Endothelial cell of umbilical vein (primary cell): ENCODE measurements at regions of chr1 and their contacts with region 1.

Region 1: DNA sequence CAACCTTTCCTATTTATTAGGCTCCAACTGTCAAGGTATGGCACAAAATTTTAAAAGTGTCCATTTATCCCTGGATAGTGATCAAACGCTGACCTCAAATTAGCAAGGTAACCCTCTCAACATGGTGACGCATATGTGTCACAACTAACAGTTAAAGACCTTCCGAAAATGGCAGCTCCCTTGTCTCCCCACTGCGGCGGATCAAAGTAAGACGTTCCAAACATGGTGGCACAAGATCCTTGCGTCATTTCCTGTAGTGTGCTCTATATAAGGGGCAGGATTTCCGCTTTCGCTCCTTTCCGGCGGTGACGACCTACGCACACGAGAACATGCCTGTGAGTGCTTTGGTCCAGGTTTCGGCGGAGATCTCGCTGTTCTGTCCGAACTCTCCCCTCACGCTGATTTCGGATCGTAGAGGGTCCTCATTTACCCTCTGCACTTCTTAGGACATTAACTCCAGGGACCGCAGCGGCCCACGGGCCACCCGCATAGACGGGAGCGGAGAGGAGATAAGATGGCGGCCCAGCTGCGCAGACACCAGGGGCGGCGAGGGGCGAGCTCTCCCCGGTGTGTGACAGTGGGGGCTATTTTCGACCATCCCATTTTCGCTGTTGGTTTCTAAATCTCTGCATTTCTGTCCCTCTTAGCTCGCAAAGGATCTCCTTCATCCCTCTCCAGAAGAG is at the start of gene RPS27:
- DNase-seq: peak; percentile 96
- H3K4me3 ChIP-seq: peak within 1 kb of the TSS; percentile 15 to 86 (median 79)
- H3K27ac ChIP-seq: peak within 1 kb of the TSS; percentile 90
- H3K4me1 ChIP-seq: peaks cover 24% of the 10 kb centered on the region
- H3K27me3 ChIP-seq: no peaks in the 10 kb centered on the region
- CTCF ChIP-seq: no peak
- POLR2A ChIP-seq: peak; percentile 99
- total RNA-seq, gene RPS27: 1,120 and 1,234 TPM in 2 replicates

Region 2: GRCh38 chr1:152034646-152035405 is 1955.8 kb before region 1 on chr1:
- CTCF ChIA-PET with region 1: no interaction called
- POLR2A ChIA-PET with region 1: no interaction called
- dilution Hi-C with region 1: no loop called
- intact Hi-C with region 1: loop called (anchors 5 kb)
- DNase-seq: peak; percentile 60
- H3K4me3 ChIP-seq: peak overlapping the region; percentile 55 to 99 (median 98)
- H3K27ac ChIP-seq: peak overlapping the region; percentile 81
- H3K4me1 ChIP-seq: peaks cover 21% of the 10 kb centered on the region
- H3K27me3 ChIP-seq: peaks cover 6 to 9% of the 10 kb centered on the region in 2 experiments
- CTCF ChIP-seq: peak; percentile 66 to 74
- POLR2A ChIP-seq: peak; percentile 25

Region 3: DNA sequence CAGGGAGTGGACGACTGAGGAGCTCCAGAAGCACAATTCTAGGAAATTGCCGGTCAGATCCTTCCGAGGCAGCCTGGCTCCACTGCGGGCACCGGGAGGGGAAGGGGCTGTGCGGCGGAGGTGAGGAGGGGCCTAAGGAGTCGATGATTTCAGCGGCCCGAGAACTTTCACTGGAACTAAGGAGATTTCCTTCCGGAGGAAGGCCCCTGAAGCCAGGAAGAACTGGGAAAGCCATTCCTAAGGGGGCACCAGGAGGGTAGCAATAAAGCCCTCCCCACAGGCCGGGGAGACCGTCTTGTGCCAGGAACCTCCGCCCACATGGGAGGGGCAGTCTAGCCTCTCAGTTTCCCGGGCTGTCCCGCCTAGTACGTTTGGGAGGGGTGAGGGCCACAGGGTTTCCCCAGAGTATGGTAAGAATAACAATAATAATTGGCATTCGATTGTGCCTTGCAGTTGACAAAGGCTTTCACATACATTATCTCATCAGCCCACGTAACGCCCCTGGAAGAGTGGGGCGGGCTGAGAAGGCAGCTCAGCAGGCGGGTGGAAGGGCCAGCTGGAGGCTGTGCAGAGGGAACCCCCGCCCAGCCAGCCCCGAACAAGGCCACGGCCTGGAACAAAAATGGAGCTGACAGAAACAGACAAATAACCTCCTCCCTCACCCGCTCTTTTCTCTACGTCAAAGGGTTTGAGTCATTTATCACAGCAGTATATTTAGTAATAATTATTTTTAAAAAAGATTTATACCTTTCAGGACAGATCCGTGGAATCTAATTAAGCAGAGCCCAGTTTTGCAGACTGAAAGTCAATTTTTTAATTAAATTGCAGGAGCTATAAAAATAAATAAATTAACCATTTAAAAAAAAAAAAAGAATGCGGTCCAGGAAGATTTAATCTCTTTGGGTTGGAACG is 292.3 kb before region 1 on chr1:
- CTCF ChIA-PET with region 1: interaction called, 3 read pairs
- POLR2A ChIA-PET with region 1: no interaction called
- dilution Hi-C with region 1: no loop called
- intact Hi-C with region 1: loop called (anchors 1 kb)
- DNase-seq: peak; percentile 96
- H3K4me3 ChIP-seq: no peak overlapping the region
- H3K27ac ChIP-seq: peak overlapping the region; percentile 90
- H3K4me1 ChIP-seq: peaks cover 26% of the 10 kb centered on the region
- H3K27me3 ChIP-seq: no peaks in the 10 kb centered on the region
- CTCF ChIP-seq: no peak
- POLR2A ChIP-seq: no peak

Region 4: GRCh38 chr1:153816283-153816889 is 174.2 kb before region 1 on chr1:
- CTCF ChIA-PET with region 1: interaction called, 29 read pairs
- POLR2A ChIA-PET with region 1: no interaction called
- dilution Hi-C with region 1: no loop called
- intact Hi-C with region 1: loop called (anchors 1 kb)
- DNase-seq: no peak
- H3K4me3 ChIP-seq: no peak overlapping the region
- H3K27ac ChIP-seq: no peak overlapping the region
- H3K4me1 ChIP-seq: peaks cover 10% of the 10 kb centered on the region
- H3K27me3 ChIP-seq: no peaks in the 10 kb centered on the region
- CTCF ChIP-seq: no peak
- POLR2A ChIP-seq: no peak

Region 5: GRCh38 chr1:153946622-153947241 is 43.9 kb before region 1 on chr1 and contains the start of gene DENND4B:
- CTCF ChIA-PET with region 1: interaction called, 14 read pairs
- POLR2A ChIA-PET with region 1: interaction called, 8 read pairs
- dilution Hi-C with region 1: no loop called
- intact Hi-C with region 1: loop called (anchors 1 kb)
- DNase-seq: peak; percentile 65
- H3K4me3 ChIP-seq: peak within 1 kb of the TSS; percentile 42 to 88 (median 73)
- H3K27ac ChIP-seq: peak within 1 kb of the TSS; percentile 63
- H3K4me1 ChIP-seq: peaks cover 9% of the 10 kb centered on the region
- H3K27me3 ChIP-seq: no peaks in the 10 kb centered on the region
- CTCF ChIP-seq: peak; percentile 89 to 97
- POLR2A ChIP-seq: no peak
- total RNA-seq, gene DENND4B: 54.3 and 57.8 TPM in 2 replicates

Region 6: DNA sequence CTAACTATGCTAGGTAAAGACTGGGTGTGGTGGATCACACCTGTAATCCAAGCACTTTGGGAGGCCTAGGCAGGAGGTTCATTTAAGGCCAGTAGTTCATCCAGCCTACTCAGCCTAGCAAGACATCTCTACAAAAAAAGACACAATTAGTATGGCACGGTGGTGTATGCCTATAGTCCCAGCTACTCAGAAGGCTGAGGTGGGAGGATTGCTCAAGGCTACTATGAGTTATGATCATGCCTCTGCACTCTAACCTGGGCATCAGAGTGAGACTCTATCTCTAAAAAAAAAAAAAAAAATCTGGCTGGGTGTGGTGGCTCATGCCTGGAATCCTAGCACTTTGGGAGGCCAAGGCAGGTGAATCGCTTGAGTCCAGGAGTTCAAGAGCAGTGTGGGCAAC is 142.6 kb after region 1 on chr1:
- CTCF ChIA-PET with region 1: no interaction called
- POLR2A ChIA-PET with region 1: interaction called, 10 read pairs
- dilution Hi-C with region 1: no loop called
- intact Hi-C with region 1: no loop called
- DNase-seq: no peak
- H3K4me3 ChIP-seq: no peak overlapping the region
- H3K27ac ChIP-seq: no peak overlapping the region
- H3K4me1 ChIP-seq: no peaks in the 10 kb centered on the region
- H3K27me3 ChIP-seq: no peaks in the 10 kb centered on the region
- CTCF ChIP-seq: no peak
- POLR2A ChIP-seq: no peak

Region 7: DNA sequence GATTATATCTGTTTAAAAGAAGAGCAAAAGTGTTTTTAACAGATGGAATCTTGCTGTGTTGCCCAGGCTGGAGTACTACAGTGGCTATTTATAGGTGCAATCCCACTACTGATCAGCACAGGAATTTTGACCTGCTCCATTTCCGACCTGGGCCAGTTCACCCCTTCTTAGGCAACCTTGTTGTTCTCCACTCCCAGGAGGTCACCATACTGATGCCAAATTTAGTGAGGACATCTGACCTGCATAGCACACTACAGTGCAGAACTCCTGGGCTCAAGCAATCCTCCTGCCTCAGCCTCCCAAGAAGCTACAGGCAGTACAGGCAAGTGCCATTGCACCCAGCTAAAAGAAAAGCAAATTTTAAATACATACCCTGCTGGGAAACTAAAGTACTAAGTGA is 175.6 kb after region 1 on chr1:
- CTCF ChIA-PET with region 1: no interaction called
- POLR2A ChIA-PET with region 1: no interaction called
- dilution Hi-C with region 1: no loop called
- intact Hi-C with region 1: no loop called
- DNase-seq: no peak
- H3K4me3 ChIP-seq: no peak overlapping the region
- H3K27ac ChIP-seq: no peak overlapping the region
- H3K4me1 ChIP-seq: no peaks in the 10 kb centered on the region
- H3K27me3 ChIP-seq: no peaks in the 10 kb centered on the region
- CTCF ChIP-seq: no peak
- POLR2A ChIP-seq: no peak